ENCODE measurements at regions of chr7 and their contacts with region 1.

Region 1: GRCh38 chr7:7182156-7183060 is at the start of gene C1GALT1:
- DNase-seq: peak; percentile 96
- H3K4me3 ChIP-seq: peak within 1 kb of the TSS; percentile 95 to 97 (median 97)
- H3K27ac ChIP-seq: peak within 1 kb of the TSS; percentile 92
- H3K4me1 ChIP-seq: peaks cover 47% of the 10 kb centered on the region
- H3K27me3 ChIP-seq: no peaks in the 10 kb centered on the region
- CTCF ChIP-seq: peak; percentile 27 to 48
- total RNA-seq, gene C1GALT1: 51.2 to 57.7 TPM

Region 2: GRCh38 chr7:7157177-7157886 is 25.1 kb before region 1 on chr7:
- CTCF ChIA-PET with region 1: no interaction called
- dilution Hi-C with region 1: no loop called
- in situ Hi-C with region 1: no loop called
- intact Hi-C with region 1: loop called (anchors 1 kb)
- DNase-seq: peak; percentile 89
- H3K4me3 ChIP-seq: peak overlapping the region; percentile 31 to 61 (median 55)
- H3K27ac ChIP-seq: peak overlapping the region; percentile 93
- H3K4me1 ChIP-seq: peaks cover 18% of the 10 kb centered on the region
- H3K27me3 ChIP-seq: no peaks in the 10 kb centered on the region
- CTCF ChIP-seq: no peak

Region 3: GRCh38 chr7:7221602-7222038 is 39.2 kb after region 1 on chr7:
- CTCF ChIA-PET with region 1: no interaction called
- dilution Hi-C with region 1: no loop called
- in situ Hi-C with region 1: no loop called
- intact Hi-C with region 1: loop called (anchors 2 kb)
- DNase-seq: peak; percentile 92
- H3K4me3 ChIP-seq: peak overlapping the region in 1 of 3 experiments; percentile 4
- H3K27ac ChIP-seq: peak overlapping the region; percentile 67
- H3K4me1 ChIP-seq: peaks cover 16% of the 10 kb centered on the region
- H3K27me3 ChIP-seq: no peaks in the 10 kb centered on the region
- CTCF ChIP-seq: no peak

Region 4: DNA sequence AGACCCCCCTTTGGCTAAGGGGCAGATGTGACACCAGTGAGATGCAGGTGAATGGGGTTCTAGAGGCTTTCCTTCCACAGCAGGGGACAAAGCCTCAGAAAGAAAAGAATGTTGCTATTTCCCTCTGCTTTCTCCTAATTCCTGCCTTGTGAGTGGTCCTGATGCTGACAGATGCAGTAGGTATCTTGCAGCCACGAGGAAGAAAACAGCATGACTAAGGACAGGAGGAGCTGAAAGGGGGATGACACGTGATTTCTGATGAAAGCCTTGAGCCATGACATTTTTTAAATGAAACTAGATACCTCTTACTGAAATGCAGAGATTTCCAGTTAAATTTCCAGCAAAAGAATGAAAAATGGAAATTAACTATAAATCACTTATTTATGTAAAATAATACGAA is 92.4 kb after region 1 on chr7:
- CTCF ChIA-PET with region 1: no interaction called
- dilution Hi-C with region 1: no loop called
- in situ Hi-C with region 1: no loop called
- intact Hi-C with region 1: loop called (anchors 5 kb)
- DNase-seq: peak; percentile 17
- H3K4me3 ChIP-seq: no peak overlapping the region
- H3K27ac ChIP-seq: no peak overlapping the region
- H3K4me1 ChIP-seq: no peaks in the 10 kb centered on the region
- H3K27me3 ChIP-seq: no peaks in the 10 kb centered on the region
- CTCF ChIP-seq: no peak

Region 5: GRCh38 chr7:7352845-7353244 is 170.4 kb after region 1 on chr7:
- CTCF ChIA-PET with region 1: no interaction called
- dilution Hi-C with region 1: no loop called
- in situ Hi-C with region 1: no loop called
- intact Hi-C with region 1: loop called (anchors 1 kb)
- DNase-seq: peak; percentile 78
- H3K4me3 ChIP-seq: no peak overlapping the region
- H3K27ac ChIP-seq: no peak overlapping the region
- H3K4me1 ChIP-seq: peaks cover 7% of the 10 kb centered on the region
- H3K27me3 ChIP-seq: no peaks in the 10 kb centered on the region
- CTCF ChIP-seq: peak; percentile 46 to 73

Region 6: DNA sequence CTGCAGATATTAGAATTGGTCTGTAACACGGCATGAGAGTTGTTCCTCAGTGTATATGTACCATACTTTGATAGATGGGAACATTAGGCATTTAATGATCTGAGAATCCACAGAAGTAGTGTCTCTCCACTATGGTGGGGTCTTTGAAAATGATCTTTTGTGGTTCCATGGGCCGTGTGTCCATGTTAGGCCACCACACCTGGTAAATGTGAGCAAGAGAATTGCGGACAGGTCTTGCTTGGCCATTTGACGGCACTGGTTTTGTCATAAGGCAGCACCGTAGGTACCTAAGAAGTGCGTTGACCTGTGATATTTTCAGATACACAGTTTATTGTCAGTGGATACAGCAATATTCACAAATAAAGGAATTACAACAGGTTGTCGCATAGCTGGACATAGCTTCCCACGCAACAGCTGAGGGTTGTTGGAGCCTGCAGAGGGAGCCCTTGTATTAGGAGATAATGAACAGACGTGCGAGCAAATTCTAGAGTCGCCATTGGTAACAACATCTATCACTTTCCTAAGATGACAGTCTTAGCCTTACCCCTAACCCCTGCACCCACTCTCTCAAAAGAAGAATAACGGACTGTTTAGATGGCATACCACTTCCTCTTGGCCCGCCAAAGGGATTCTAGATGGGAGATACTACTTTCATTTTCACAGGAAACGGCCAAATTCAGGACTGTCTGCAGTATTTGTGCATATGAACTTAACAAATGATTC is 241.9 kb after region 1 on chr7:
- CTCF ChIA-PET with region 1: no interaction called
- dilution Hi-C with region 1: no loop called
- in situ Hi-C with region 1: no loop called
- intact Hi-C with region 1: loop called (anchors 1 kb)
- DNase-seq: peak; percentile 51
- H3K4me3 ChIP-seq: peak overlapping the region; percentile 32 to 51 (median 45)
- H3K27ac ChIP-seq: no peak overlapping the region
- H3K4me1 ChIP-seq: no peaks in the 10 kb centered on the region
- H3K27me3 ChIP-seq: no peaks in the 10 kb centered on the region
- CTCF ChIP-seq: peak; percentile 88

Region 7: DNA sequence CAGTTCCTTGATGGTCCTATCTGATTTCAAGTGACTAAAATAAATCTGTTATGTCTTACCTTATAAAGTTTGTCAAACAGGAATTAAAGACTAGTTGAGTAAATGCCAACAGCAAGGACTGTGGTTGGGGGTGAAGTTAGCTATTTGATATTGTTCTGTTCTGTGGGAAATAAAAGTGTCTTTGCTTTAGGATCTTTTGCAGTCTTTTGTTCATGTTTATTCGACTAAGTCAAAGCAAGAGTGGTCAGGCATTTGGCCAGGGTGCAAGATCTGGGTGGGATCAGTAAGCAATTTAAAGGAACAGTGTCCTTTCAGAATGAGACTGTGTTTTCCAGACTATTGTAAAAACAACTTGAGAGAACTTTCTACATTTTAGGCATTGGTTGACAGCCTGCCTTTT is 353.3 kb after region 1 on chr7 and contains the start of gene COL28A1:
- CTCF ChIA-PET with region 1: no interaction called
- dilution Hi-C with region 1: no loop called
- in situ Hi-C with region 1: no loop called
- intact Hi-C with region 1: loop called (anchors 2 kb)
- DNase-seq: no peak
- H3K4me3 ChIP-seq: no peak within 1 kb of the TSS
- H3K27ac ChIP-seq: no peak within 1 kb of the TSS
- H3K4me1 ChIP-seq: no peaks in the 10 kb centered on the region
- H3K27me3 ChIP-seq: no peaks in the 10 kb centered on the region
- CTCF ChIP-seq: no peak
- total RNA-seq, gene COL28A1: 0.16 to 0.17 TPM

Measured in mammary epithelial cell (primary cell).